Activated naive CD4-positive, alpha-beta T cell treated with anti-CD3 and anti-CD28 coated beads for 36 hours (primary cell): ENCODE measurements at regions of chr19 and their contacts with region 1.

Region 1: DNA sequence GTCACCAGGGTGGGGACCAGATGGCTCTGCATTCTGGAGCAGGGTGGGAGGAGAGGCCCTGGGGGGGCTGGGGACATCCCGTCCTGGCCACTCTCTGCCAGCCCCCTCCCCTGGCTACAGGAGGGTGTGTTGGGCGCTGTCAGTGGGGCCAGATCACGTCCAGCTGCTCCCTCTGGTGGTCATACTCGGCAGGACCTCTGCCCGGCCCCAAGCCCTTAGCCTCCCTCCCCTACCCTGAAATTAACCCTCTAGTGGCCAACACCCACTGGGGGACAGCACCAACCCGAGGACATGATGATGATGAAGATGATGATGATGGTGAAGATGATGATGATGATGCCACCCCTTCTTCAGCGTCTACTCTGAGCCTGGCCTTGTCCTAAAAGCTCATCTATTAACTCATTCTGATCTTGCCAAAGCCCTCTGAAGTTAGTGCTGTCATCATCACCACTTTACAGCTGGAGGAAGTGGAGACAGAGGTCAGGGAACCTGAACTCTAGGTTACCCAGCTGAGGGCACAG is 590 bp upstream of the LGI4 start:
- DNase-seq: peak; percentile 79
- H3K4me3 Mint-ChIP-seq: no peak overlapping the region
- H3K27ac Mint-ChIP-seq: no peak overlapping the region
- H3K4me1 Mint-ChIP-seq: no peaks in the 10 kb centered on the region
- H3K27me3 Mint-ChIP-seq: no peaks in the 10 kb centered on the region

Region 2: GRCh38 chr19:35114353-35115176 is 20.9 kb before region 1 on chr19:
- CTCF ChIA-PET with region 1: interaction called, 13 read pairs
- intact Hi-C with region 1: loop called (anchors 2 kb)
- DNase-seq: peak; percentile 78
- H3K4me3 Mint-ChIP-seq: no peak overlapping the region
- H3K27ac Mint-ChIP-seq: no peak overlapping the region
- H3K4me1 Mint-ChIP-seq: peaks cover 4% of the 10 kb centered on the region
- H3K27me3 Mint-ChIP-seq: no peaks in the 10 kb centered on the region